HepG2 (cell line): ENCODE measurements at regions of chr14 and their contacts with region 1.

Region 1: GRCh38 chr14:23631702-23632460 is 4.3 kb upstream of the DHRS2 start:
- DNase-seq: peak; percentile 96
- ATAC-seq: peak; percentile 28
- H3K4me3 ChIP-seq: peak overlapping the region; percentile 35 to 59 (median 41)
- H3K27ac ChIP-seq: peak overlapping the region; percentile 48
- H3K4me1 ChIP-seq: peaks cover 68% of the 10 kb centered on the region
- H3K27me3 ChIP-seq: no peaks in the 10 kb centered on the region; a peak in 1 of 5 replicates
- CTCF ChIP-seq: no peak
- EP300 ChIP-seq: peak; percentile 9 to 39; a peak in 1 of 4 replicates
- POLR2A ChIP-seq: no peak
- RAD21 ChIP-seq: peak; percentile 93

Region 2: GRCh38 chr14:23577004-23577681 is 54.7 kb before region 1 on chr14:
- CTCF ChIA-PET with region 1: no interaction called
- POLR2A ChIA-PET with region 1: interaction called, 924 read pairs
- in situ Hi-C with region 1: no loop called
- intact Hi-C with region 1: loop called (anchors 1 kb)
- DNase-seq: no peak
- ATAC-seq: no peak
- H3K4me3 ChIP-seq: no peak overlapping the region; a peak in 1 of 6 replicates
- H3K27ac ChIP-seq: no peak overlapping the region
- H3K4me1 ChIP-seq: peaks cover 45% of the 10 kb centered on the region
- H3K27me3 ChIP-seq: peaks cover 0 to 2% of the 10 kb centered on the region in 2 experiments; a peak in 2 of 5 replicates
- CTCF ChIP-seq: no peak
- EP300 ChIP-seq: no peak
- POLR2A ChIP-seq: no peak
- RAD21 ChIP-seq: no peak

Region 3: GRCh38 chr14:23613242-23614070 is 18.4 kb before region 1 on chr14:
- CTCF ChIA-PET with region 1: interaction called, 8 read pairs
- POLR2A ChIA-PET with region 1: interaction called, 1,105 read pairs
- in situ Hi-C with region 1: no loop called
- intact Hi-C with region 1: loop called (anchors 1 kb)
- DNase-seq: peak; percentile 100
- ATAC-seq: peak; percentile 70
- H3K4me3 ChIP-seq: peak overlapping the region in 2 of 3 experiments; percentile 9 to 26; a peak in 3 of 6 replicates
- H3K27ac ChIP-seq: peak overlapping the region; percentile 89
- H3K4me1 ChIP-seq: peaks cover 95% of the 10 kb centered on the region
- H3K27me3 ChIP-seq: no peaks in the 10 kb centered on the region
- CTCF ChIP-seq: no peak; the same call in 1 of the 2 replicates
- EP300 ChIP-seq: peak; percentile 46 to 95; a peak in 2 of 4 replicates
- POLR2A ChIP-seq: 0 out of 4 replicates have a peak, but pooled peaks have one; percentile 26 to 40
- RAD21 ChIP-seq: no peak; the same call in 1 of the 2 replicates

Region 4: DNA sequence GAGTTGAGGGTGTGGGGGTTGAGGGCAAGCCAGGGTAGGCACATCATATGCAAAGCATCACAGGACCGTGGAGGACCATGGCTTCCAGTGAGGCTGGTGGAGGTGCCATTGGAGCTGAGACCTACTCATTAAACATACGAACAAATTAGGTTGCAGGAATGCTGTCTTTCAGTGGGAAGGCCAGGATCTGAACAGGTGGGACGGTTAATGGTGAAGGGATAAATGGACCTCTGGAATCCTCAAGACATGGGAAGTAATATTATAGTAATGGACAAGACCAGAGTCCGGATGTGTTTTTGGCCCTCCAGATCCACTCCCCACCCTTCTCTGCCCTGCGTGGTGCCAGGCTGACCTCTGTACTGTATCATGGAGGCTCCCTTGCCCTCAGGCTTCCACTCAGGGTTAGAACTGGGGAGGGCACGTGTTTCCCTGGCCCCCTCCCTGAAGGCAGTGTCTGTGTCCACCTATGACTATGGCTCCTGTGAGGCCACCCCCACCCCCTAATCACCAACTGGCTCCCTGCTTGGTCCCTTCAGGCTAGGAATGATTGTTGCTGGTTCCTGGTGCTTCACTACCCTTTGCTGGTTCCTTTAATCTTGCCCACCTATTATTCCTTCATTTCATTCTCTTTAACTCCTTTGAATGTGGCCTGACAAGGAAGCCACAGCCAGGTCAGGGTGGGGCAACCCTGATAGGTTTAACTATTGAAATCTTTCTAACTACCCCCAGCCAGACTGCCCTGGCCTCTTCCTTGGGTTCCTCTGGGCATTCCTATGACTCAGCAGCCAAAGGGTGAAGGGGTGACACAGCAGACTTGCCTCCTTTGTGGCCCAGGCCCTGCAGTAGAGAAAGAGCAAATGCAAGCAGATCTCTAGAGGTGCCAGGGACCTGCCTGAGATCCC is 15.0 kb after region 1 on chr14:
- CTCF ChIA-PET with region 1: no interaction called
- POLR2A ChIA-PET with region 1: interaction called, 173 read pairs
- in situ Hi-C with region 1: no loop called
- intact Hi-C with region 1: loop called (anchors 1 kb)
- DNase-seq: peak; percentile 76
- ATAC-seq: peak; percentile 4
- H3K4me3 ChIP-seq: no peak overlapping the region
- H3K27ac ChIP-seq: peak overlapping the region; percentile 3
- H3K4me1 ChIP-seq: peaks cover 27% of the 10 kb centered on the region
- H3K27me3 ChIP-seq: peaks cover 0 to 18% of the 10 kb centered on the region in 2 experiments; a peak in 1 of 5 replicates
- CTCF ChIP-seq: no peak; the same call in 1 of the 2 replicates
- EP300 ChIP-seq: 0 out of 4 replicates have a peak, but pooled peaks of 1 of the 2 experiments have one; percentile 17
- POLR2A ChIP-seq: peak in 1 of 2 experiments; percentile 97; a peak in 2 of 4 replicates
- RAD21 ChIP-seq: peak; percentile 77

Region 5: GRCh38 chr14:23929822-23930294 is 298.0 kb after region 1 on chr14:
- CTCF ChIA-PET with region 1: interaction called, 17 read pairs
- POLR2A ChIA-PET with region 1: interaction called, 3 read pairs
- in situ Hi-C with region 1: no loop called
- intact Hi-C with region 1: no loop called
- DNase-seq: peak; percentile 87
- ATAC-seq: peak; percentile 94
- H3K4me3 ChIP-seq: no peak overlapping the region
- H3K27ac ChIP-seq: no peak overlapping the region
- H3K4me1 ChIP-seq: peaks cover 11% of the 10 kb centered on the region
- H3K27me3 ChIP-seq: no peaks in the 10 kb centered on the region
- CTCF ChIP-seq: peak; percentile 93
- EP300 ChIP-seq: no peak
- POLR2A ChIP-seq: no peak
- RAD21 ChIP-seq: peak; percentile 87